ENCODE measurements at regions of chr15 and their contacts with region 1.

Region 1: GRCh38 chr15:43225201-43225949 is 4.6 kb upstream of the EPB42 start:
- DNase-seq: no peak
- H3K4me3 ChIP-seq: no peak overlapping the region
- H3K27me3 ChIP-seq: peaks cover 6% of the 10 kb centered on the region
- CTCF ChIP-seq: peak; percentile 79

Region 2: DNA sequence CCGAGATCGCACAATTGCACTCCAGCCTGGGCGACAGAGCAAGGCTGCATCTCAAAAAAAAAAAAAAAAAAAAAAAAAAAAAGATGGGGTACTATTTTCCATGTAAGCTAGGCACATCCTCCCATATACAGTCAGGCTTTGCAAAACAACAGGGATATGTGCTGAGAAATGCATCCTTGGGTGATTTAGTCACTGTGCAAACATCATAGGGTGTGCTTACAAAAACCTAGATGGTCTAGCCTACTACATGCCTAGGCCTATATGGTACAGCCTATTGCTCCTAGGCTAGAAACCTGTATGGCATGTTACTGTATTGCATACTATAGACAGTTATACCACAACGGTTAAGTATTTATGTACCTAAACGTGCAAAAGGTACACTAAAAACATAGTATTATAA is 379.8 kb before region 1 on chr15:
- CTCF ChIA-PET with region 1: no interaction called
- POLR2A ChIA-PET with region 1: no interaction called
- DNase-seq: no peak
- H3K4me3 ChIP-seq: no peak overlapping the region
- H3K27me3 ChIP-seq: no peaks in the 10 kb centered on the region
- CTCF ChIP-seq: no peak

Region 3: DNA sequence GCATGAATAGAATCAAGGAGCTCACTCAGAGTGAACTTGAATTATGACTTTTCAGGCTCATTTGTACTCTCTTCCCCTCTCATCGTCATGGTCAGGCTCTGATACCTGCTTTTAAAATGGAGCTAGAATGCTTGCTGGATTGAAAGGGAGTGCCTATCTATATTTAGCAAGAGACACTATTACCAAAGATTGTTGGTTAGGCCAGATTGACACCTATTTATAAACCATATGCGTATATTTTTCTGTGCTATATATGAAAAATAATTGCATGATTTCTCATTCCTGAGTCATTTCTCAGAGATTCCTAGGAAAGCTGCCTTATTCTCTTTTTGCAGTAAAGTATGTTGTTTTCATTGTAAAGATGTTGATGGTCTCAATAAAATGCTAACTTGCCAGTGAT is 30.6 kb before region 1 on chr15:
- CTCF ChIA-PET with region 1: interaction called, 10 read pairs
- POLR2A ChIA-PET with region 1: no interaction called
- DNase-seq: no peak
- H3K4me3 ChIP-seq: no peak overlapping the region
- H3K27me3 ChIP-seq: no peaks in the 10 kb centered on the region
- CTCF ChIP-seq: no peak

Region 4: GRCh38 chr15:43204016-43204901 is 21.1 kb before region 1 on chr15:
- CTCF ChIA-PET with region 1: interaction called, 11 read pairs
- POLR2A ChIA-PET with region 1: no interaction called
- DNase-seq: no peak
- H3K4me3 ChIP-seq: no peak overlapping the region
- H3K27me3 ChIP-seq: peaks cover 27% of the 10 kb centered on the region
- CTCF ChIP-seq: peak; percentile 77

Region 5: DNA sequence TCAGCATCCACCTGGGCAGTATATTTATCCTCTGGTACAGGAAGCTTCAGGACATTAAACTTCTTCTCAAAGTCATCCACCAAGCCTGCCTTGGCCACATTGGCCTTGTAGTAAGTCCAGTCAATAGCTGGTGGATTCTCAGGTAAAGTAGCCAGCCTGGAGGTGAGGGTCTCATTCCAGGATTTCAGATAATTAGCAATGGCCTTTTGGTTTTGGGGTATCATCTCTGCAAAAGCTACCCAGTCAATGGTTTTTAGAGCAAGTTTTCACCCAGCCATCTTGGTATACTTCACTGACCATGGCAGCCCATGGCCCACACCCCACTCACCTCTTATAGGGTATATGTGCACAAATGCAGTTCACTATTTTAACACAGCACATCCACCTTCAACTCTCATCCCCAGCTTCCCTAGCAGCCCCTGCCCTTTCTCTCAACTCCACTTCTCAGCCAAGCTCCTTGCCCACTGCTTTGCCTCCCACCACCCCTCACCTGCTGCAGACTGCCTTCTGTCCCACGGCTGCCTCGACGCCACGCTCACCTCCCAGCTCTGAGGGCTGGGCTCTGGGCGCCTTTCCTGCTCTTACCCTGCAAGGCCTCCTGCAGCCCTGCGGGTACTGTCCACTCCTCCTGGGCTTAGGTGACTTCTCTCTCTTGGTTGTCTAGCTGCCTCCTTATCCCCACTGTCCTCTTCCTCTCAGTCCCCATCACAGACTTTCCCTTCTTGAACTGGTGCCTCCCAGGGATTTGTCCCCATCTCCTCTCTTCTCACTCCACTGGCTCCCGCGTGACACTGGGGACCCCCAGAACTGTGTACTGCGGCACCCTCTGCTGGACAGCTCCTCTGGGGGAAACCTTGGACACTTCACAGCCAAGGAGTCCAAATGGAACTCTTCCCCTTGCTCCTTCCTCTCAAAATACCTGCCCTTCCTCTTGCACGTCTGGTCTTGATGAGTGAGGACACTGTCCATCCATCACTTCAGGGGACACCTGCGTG is 43.0 kb after region 1 on chr15:
- CTCF ChIA-PET with region 1: interaction called, 58 read pairs
- POLR2A ChIA-PET with region 1: no interaction called
- DNase-seq: no peak
- H3K4me3 ChIP-seq: no peak overlapping the region
- H3K27me3 ChIP-seq: peaks cover 27% of the 10 kb centered on the region
- CTCF ChIP-seq: peak; percentile 26; the same call in 1 of the 2 replicates

Region 6: GRCh38 chr15:43274136-43274535 is 48.8 kb after region 1 on chr15:
- CTCF ChIA-PET with region 1: interaction called, 58 read pairs
- POLR2A ChIA-PET with region 1: no interaction called
- DNase-seq: no peak
- H3K4me3 ChIP-seq: no peak overlapping the region
- H3K27me3 ChIP-seq: peaks cover 10% of the 10 kb centered on the region
- CTCF ChIP-seq: no peak

Measured in BJ (cell line).